ENCODE measurements at regions of chr12 and their contacts with region 1.

Region 1: DNA sequence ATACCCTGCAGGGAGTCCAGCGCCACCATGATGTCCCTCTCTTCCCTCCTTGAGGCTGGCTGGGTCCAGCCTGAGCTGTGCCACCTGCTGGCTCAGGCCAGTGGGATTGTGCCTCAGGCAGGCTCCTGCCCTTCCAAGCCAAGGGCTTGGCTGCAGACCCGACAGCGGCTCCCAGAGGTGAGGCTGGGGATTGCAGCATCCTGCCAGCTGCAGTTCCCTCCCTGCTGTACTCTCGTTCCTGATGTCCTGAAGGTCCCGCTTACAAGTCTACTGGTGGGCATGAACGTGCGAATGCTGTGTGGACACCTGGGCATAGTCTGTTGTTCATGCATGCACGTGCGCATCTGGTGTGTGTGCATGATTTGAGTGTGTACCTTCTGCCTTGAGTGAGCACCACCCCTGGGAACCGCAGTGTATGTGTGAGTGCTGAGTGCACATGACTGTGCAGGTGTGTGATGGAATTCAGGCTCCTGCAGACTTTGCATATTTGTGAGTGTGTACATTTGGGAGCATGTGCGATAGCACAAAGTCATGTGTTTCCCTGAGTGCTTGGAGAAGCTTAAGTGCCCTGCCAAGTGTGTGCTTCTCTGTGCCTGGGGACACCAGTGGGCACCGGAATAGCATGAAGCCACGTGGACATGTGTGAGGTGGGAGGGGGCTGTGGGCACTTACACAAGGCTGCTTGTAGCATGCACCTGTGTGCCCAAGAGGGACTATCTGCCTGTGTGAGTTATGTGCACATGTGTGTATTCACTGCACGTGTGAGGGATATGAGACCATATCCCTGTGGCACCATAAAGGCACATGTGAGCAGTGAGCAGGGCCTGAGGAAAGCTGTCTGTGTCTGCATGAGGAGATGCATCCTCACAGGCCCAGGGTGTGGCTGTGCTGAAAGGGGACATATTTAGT is 19.3 kb upstream of the KRT7 start:
- DNase-seq: peak; percentile 79
- ATAC-seq: peak; percentile 78
- H3K4me3 Mint-ChIP-seq: no peak overlapping the region
- H3K27ac Mint-ChIP-seq: no peak overlapping the region
- H3K4me1 Mint-ChIP-seq: no peaks in the 10 kb centered on the region
- H3K27me3 Mint-ChIP-seq: peaks cover 13% of the 10 kb centered on the region

Region 2: DNA sequence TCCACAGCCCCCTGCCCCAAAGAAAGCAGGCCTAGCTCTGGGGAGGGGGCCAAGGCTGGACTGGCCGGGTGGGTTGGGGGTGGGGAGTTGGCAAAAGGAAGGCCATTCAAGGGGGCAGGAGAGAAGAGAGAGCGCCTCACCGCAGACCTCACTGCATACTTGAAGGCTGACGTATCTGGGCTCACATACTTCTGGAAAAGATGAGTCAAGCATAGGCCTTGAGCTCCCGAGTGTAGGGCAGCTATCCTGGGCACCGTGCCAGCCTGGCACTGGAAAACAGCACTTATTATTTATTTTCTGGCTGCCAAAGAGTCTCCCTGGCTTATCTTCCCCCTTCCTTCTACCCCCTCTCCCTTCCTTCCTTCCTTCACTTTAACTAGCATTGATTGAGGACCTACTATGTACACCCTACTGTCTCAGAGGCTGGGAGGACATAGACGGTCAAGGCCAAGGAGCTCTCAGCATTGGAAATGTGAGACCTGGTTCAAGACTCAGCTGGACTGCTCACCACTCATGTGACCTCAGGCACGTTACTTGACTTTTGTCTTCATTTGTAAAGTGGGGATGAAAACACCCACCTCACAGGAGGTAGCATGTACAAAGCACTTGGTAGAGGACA is 21.5 kb before region 1 on chr12:
- CTCF ChIA-PET with region 1: interaction called, 10 read pairs
- DNase-seq: no peak
- ATAC-seq: no peak
- H3K4me3 Mint-ChIP-seq: no peak overlapping the region
- H3K27ac Mint-ChIP-seq: no peak overlapping the region
- H3K4me1 Mint-ChIP-seq: peaks cover 4% of the 10 kb centered on the region
- H3K27me3 Mint-ChIP-seq: peaks cover 13% of the 10 kb centered on the region

Measured in activated CD8-positive, alpha-beta memory T cell treated with anti-CD3 and anti-CD28 coated beads, Interleukin-2, amount 10 ng/mL, durations not matched to agents 7 days and 5 days (primary cell).